ENCODE measurements at regions of chr16 and their contacts with region 1.

Region 1: GRCh38 chr16:84084570-84085270 is 32.0 kb downstream of the MBTPS1 start:
- DNase-seq: peak; percentile 85
- CTCF ChIP-seq: peak; percentile 94

Region 2: DNA sequence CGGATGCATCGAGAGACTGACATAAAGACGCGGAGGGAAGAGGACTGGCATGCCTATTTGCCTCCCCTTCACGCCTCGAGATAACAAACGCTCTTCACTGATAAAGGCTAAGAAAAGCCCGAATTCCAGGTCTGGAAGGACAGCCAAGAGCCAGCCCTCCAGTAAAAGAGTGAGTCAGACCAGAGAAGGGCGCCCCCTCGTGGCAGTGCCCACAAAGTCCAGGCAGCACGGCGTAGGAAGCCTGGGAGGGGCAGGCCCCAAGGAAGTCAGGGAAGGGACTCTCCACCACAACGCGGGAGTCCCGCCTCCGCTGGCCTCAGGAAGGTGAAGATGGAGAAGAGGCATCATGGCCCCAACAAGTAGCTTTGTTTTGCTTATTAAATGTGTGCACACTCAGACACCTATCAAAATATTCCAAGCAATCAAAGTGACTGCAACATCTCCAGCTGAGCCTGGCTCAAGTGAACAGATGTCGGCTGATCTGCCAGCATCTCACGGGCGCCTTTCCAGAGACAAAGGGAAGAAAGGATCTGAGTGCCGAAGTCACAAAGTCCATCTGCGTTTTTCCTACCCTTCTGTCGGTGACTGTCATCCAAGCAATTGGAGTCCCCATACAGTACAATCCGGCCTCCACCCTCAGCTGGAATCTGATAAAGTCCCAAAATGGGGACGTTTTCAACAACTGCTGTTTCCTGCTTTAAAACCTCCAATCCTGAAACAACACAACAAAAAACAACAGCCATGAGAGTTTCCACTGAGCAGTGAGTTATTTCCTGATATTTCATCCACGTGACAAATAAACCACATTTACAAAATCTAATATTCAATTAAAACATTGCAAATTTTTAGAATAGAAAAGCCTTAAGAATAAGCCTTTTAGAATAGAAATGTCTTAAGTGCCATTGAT is 21.7 kb before region 1 on chr16:
- CTCF ChIA-PET with region 1: interaction called, 21 read pairs
- POLR2A ChIA-PET with region 1: no interaction called
- DNase-seq: peak; percentile 65
- CTCF ChIP-seq: peak; percentile 54

Region 3: GRCh38 chr16:84069540-84069939 is 15.2 kb before region 1 on chr16:
- CTCF ChIA-PET with region 1: interaction called, 21 read pairs
- POLR2A ChIA-PET with region 1: no interaction called
- DNase-seq: no peak
- CTCF ChIP-seq: no peak

Region 4: DNA sequence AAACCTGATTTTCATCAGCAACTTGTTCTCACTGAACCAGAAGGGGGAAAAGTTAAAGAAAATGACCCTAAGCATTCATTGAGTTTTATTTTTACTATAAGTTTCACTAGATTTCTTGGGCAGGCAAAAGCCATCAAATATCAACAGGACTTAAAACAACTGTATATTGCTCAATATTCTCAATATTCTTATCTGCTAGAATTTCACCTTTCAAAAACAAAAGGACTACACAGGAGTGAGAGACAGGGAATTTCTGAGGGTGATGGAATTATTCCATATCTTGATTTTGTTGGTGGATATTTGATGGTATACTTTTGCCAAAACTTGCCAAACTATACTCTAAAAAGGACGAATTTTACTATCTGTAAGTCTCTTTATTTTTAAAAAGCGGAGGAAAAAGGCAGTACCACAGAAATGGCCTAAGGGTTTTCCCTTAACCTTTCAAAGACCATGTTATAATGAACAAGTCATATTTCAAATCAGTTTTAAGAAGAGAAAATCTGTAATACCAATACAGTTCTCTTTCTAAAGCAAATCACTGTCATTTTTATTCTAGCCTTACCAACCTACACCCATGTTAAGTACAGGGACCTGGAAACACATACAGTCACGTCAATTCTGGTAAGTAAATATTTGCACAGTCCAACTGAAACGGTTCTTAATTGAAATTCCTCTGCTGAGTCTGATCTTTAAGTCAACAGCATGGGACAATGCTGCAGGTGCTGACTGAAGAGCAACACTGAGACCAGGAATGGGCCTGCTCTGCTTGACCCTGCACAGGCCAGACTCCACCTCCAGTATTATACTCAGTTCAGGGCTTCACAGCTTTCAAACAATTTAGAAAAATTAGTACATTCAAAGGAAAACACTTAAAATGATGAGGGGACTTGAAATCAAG is 11.6 kb after region 1 on chr16:
- CTCF ChIA-PET with region 1: interaction called, 19 read pairs
- POLR2A ChIA-PET with region 1: no interaction called
- DNase-seq: no peak
- CTCF ChIP-seq: no peak

Measured in GM10248 (cell line).